Activated CD4-positive, alpha-beta T cell treated with anti-CD3 and anti-CD28 coated beads, Interleukin-2, amount 10 ng/mL, durations not matched to agents 24 days and 14 days (primary cell): ENCODE measurements at regions of chr5 and their contacts with region 1.

Region 1: DNA sequence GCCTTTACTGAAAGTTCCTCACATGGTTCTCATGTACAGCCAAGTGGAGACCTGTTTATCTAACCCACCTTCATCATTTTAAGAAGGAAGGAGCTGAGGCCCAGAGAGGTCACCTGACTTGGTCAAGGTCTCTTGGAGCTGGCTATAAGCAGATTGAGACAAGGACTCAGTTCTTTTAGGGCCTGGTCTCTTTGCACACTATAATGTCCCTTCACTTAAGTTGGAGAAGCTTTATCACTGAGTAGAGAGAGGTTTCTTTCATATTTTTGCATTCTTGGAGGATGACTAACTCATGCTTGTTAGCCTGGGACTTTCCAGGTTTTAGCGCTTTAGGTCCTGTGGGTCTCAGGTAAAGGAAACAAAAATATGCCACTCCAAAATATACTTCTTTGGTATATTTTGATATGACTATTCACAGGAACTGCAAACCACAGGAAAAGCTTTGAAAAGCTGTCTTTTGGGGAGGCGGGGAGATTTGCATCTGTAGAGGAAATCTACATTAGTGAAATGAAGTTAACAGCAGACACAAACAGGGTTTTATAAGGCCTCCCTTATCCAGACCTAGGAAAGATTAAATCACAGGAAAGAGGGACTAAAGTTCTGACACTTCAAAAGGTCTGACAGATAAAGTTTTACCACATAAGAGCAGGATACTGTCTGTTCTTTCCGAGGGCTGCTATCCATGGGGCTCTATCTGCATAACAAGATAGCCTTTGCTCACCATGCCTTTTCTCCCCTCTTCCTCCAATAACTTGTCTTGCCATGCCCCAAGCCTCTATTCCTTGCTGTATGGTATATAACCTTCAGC is 95.8 kb upstream of the ANKRD55 start:
- DNase-seq: peak; percentile 89
- H3K4me3 Mint-ChIP-seq: peak overlapping the region; percentile 67
- H3K27ac Mint-ChIP-seq: peak overlapping the region; percentile 89
- H3K4me1 Mint-ChIP-seq: peaks cover 57% of the 10 kb centered on the region
- H3K27me3 Mint-ChIP-seq: no peaks in the 10 kb centered on the region

Region 2: DNA sequence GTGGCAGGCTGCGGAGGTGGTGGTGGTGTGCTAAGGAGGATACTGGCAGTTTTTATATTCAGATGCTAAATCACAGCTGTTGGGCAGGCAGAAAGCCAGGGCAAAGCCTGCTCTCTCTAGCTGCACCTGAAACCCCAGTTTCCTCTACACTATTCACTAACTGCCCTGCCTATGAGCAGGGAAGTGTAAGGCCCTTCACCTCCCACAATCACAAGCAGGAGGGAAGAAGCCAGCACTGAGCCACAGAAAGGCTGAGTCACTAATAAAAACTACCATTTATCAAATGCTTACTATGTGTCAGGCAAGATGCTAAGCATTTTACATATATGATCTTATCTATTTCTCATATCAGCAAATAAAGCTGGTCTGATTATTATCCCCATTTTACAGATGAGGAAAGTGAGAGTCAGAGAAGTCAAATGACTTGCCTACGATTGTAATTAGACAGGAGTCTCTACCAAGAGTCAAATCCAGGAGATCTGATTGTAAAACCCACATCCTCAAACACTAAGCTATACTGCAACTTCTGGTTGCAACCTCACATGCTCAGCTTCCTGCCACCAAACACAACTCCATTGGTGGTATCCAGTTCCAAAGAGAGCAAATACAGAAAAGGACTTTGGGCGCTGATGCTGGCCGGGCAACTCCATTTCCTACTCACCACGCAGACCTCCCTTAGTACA is 316.5 kb before region 1 on chr5:
- intact Hi-C with region 1: loop called (anchors 5 kb)
- DNase-seq: peak; percentile 84
- H3K4me3 Mint-ChIP-seq: peak overlapping the region; percentile 47
- H3K27ac Mint-ChIP-seq: peak overlapping the region; percentile 47
- H3K4me1 Mint-ChIP-seq: peaks cover 28% of the 10 kb centered on the region
- H3K27me3 Mint-ChIP-seq: no peaks in the 10 kb centered on the region

Region 3: GRCh38 chr5:56259002-56259511 is 69.9 kb before region 1 on chr5:
- intact Hi-C with region 1: loop called (anchors 1 kb)
- DNase-seq: no peak
- H3K4me3 Mint-ChIP-seq: no peak overlapping the region
- H3K27ac Mint-ChIP-seq: peak overlapping the region; percentile 7
- H3K4me1 Mint-ChIP-seq: no peaks in the 10 kb centered on the region
- H3K27me3 Mint-ChIP-seq: peaks cover 27% of the 10 kb centered on the region

Region 4: GRCh38 chr5:56352808-56353590 is 24.0 kb after region 1 on chr5:
- intact Hi-C with region 1: loop called (anchors 1 kb)
- DNase-seq: no peak
- H3K4me3 Mint-ChIP-seq: peak overlapping the region; percentile 19
- H3K27ac Mint-ChIP-seq: peak overlapping the region; percentile 82
- H3K4me1 Mint-ChIP-seq: peaks cover 16% of the 10 kb centered on the region
- H3K27me3 Mint-ChIP-seq: no peaks in the 10 kb centered on the region

Region 5: GRCh38 chr5:56670118-56670483 is 341.1 kb after region 1 on chr5:
- intact Hi-C with region 1: loop called (anchors 1 kb)
- DNase-seq: peak; percentile 86
- H3K4me3 Mint-ChIP-seq: peak overlapping the region; percentile 13
- H3K27ac Mint-ChIP-seq: peak overlapping the region; percentile 67
- H3K4me1 Mint-ChIP-seq: peaks cover 36% of the 10 kb centered on the region
- H3K27me3 Mint-ChIP-seq: peaks cover 6% of the 10 kb centered on the region

Region 6: DNA sequence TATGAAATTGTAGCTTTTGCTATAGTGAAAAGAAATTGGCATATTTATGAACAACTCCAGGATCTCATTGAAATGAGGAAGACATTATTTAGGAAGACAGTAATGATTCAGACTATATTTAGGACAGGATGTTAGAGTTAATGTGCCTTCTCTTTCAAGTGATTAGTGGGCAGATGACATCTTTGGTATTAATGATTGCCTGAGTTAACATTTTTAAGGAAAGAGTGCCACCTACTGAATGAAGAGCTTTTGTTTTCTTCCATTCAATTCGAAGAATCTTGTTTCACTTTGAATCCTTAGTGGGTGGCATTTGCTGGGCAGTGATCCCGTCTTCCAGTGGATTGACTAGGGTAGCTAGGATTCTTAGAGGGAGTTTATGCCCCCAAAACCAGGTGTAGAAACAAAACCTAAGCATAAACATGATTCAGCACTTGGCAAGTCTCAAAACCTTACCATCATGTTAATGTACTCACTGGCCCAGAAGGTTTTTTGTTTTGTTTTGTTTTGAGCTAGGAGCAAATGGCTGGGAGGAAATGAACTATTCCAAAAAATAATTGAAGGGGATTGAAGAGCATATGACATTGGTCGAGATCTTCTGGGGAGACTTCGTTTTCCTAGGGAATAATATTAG is 509.6 kb after region 1 on chr5:
- intact Hi-C with region 1: loop called (anchors 5 kb)
- DNase-seq: no peak
- H3K4me3 Mint-ChIP-seq: peak overlapping the region; percentile 52
- H3K27ac Mint-ChIP-seq: peak overlapping the region; percentile 70
- H3K4me1 Mint-ChIP-seq: peaks cover 46% of the 10 kb centered on the region
- H3K27me3 Mint-ChIP-seq: no peaks in the 10 kb centered on the region